Tibial artery (tissue), 4 donors: ENCODE measurements at regions of chr5 and their contacts with region 1.

Region 1: GRCh38 chr5:72018146-72018803 is 89.0 kb upstream of the MAP1B start:
- DNase-seq: peak; percentile 51 to 70
- H3K4me3 ChIP-seq: no peak overlapping the region
- H3K27ac ChIP-seq: no peak overlapping the region
- H3K4me1 ChIP-seq: no peaks in the 10 kb centered on the region
- H3K27me3 ChIP-seq: no peaks in the 10 kb centered on the region
- CTCF ChIP-seq: peak; percentile 76 to 89

Region 2: DNA sequence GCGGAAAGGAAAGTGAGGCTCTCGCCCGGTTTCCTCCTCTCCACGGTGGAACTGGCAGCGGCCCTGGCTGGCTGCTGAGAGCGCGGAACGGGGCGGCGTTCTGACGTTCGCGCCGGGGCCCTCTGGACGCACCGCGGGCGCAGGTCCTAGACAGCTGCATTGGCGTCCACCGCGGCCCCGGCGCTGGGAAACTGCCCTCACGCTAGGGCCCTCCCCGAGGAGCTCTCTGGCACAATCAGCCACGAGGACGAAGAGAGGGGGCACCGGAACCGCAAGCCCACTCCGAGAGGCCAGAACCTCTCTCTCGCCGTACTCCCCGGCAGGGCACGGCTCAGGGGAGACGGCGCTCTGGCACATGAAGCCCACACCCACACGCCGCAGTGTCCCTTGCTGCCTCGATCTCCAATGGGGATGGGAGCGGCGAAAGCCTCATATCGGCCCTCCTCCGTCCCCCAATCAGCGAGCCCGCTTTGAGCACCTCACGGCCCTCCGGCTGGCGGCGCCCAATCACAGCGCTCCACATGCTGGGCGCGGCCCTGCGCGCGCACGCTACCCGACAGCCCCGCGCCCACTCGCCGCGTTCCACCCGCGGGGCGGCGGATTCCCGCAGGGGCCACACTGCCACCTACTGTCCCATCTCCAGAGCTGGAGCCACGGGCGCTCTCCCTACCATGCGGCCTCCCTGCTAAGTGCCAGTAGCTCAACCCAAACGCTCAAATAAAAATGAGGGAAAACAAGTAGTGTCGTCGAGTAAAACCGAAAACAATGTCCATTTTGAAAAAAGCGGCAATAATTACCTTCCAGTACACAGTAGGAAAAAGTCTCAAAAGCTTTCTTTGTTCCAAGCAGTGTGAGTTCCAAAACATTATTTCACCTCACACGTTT is 289.9 kb after region 1 on chr5:
- intact Hi-C with region 1: no loop called
- DNase-seq: peak; percentile 97 to 99
- H3K4me3 ChIP-seq: peak overlapping the region; percentile 66 to 72
- H3K27ac ChIP-seq: peak overlapping the region; percentile 95
- H3K4me1 ChIP-seq: peaks cover 0 to 40% (median 8%) of the 10 kb centered on the region in 4 donors
- H3K27me3 ChIP-seq: no peaks in the 10 kb centered on the region
- CTCF ChIP-seq: peak; percentile 89 to 93

Region 3: GRCh38 chr5:72319976-72320752 is 301.9 kb after region 1 on chr5 and contains the starts of genes MRPS27 and PTCD2:
- intact Hi-C with region 1: loop called (anchors 5 kb)
- DNase-seq: peak; percentile 96 to 97
- H3K4me3 ChIP-seq: peak within 1 kb of the TSS; percentile 65 to 87
- H3K27ac ChIP-seq: peak within 1 kb of the TSS; percentile 80
- H3K4me1 ChIP-seq: peaks cover 0 to 16% (median 9%) of the 10 kb centered on the region in 4 donors
- H3K27me3 ChIP-seq: no peaks in the 10 kb centered on the region
- CTCF ChIP-seq: peak in 1 of 2 experiments; percentile 4

Region 4: DNA sequence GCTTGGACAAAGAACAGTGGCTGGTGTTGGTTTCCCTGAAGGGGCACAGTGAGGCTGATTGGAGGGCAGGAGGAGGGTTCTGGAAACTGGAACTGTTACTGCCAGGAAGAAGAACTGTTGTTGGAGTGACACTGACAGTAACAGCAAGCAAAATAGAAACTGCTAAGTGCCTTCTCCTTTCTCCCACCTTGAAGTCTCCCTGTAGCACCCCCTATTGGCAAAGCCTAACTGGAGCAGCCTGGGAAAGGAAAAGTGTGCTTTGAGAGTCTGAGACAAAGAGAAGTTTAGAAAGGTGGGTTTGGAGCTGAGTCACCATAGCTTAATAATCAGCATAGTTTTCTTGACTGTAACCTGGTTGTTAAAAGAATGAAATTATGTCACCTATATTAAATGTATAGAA is 1152.2 kb after region 1 on chr5:
- intact Hi-C with region 1: loop called (anchors 5 kb)
- DNase-seq: no peak
- H3K4me3 ChIP-seq: no peak overlapping the region
- H3K27ac ChIP-seq: no peak overlapping the region
- H3K4me1 ChIP-seq: no peaks in the 10 kb centered on the region
- H3K27me3 ChIP-seq: peaks cover 0 to 7% of the 10 kb centered on the region in 2 donors
- CTCF ChIP-seq: no peak